Mammary epithelial cell (primary cell): ENCODE measurements at regions of chr5 and their contacts with region 1.

Region 1: DNA sequence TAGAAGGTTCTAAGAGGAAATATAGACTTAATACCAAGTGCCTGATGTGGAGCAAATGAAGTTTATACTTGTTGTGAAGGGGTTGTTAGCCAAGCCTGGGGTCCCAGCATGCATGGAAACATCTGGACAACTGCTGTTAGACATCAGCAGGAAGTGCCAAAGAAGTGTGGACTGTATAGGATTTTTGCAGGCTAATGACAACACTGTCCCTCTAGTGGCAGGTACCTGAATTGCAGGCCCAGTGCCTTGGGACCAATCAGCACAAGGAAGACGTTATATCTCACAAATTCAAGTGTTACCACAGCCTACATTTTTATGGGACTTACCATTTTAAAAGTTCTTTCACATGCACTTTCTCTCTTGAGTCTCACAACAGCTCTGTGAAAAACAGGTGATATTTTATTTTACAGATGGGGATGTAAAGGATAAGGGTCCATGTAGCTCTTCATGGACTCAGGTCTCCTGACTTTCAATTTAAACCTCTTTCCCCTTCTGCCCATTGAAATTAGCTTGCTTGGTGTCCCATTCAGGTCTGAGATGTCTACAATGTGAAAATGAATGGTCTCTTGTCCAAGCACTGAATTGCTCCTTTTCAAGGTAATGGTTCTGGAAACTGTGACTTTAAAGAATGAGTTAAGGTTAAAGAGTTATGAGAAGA is 89.0 kb upstream of the MAP1B start:
- DNase-seq: peak; percentile 40
- H3K4me3 ChIP-seq: no peak overlapping the region
- H3K27ac ChIP-seq: no peak overlapping the region
- H3K4me1 ChIP-seq: peaks cover 4% of the 10 kb centered on the region
- H3K27me3 ChIP-seq: no peaks in the 10 kb centered on the region
- CTCF ChIP-seq: peak; percentile 90 to 100

Region 2: GRCh38 chr5:72063219-72063819 is 45.0 kb after region 1 on chr5:
- CTCF ChIA-PET with region 1: no interaction called
- dilution Hi-C with region 1: no loop called
- in situ Hi-C with region 1: no loop called
- intact Hi-C with region 1: no loop called
- DNase-seq: peak; percentile 8
- H3K4me3 ChIP-seq: no peak overlapping the region
- H3K27ac ChIP-seq: no peak overlapping the region
- H3K4me1 ChIP-seq: peaks cover 28% of the 10 kb centered on the region
- H3K27me3 ChIP-seq: no peaks in the 10 kb centered on the region
- CTCF ChIP-seq: no peak

Region 3: DNA sequence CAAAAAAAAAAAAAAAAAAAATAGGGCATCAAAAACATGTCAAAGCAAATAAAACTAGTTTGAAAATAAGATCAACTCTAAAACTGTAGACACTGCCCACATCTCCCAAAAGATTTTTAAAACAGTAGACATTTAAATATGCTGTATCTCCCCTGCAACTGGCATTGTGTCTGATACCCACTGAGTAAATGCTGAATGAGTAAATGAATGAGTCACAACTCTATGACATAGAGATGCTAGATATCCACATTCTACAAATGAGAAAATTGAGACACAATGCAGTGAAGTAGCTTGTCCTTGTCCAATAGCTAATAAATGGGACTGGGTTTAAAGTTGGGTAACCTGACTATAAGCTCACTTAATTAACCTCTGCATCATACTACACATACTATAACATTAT is 74.9 kb after region 1 on chr5:
- CTCF ChIA-PET with region 1: no interaction called
- dilution Hi-C with region 1: no loop called
- in situ Hi-C with region 1: no loop called
- intact Hi-C with region 1: no loop called
- DNase-seq: peak; percentile 35
- H3K4me3 ChIP-seq: no peak overlapping the region
- H3K27ac ChIP-seq: no peak overlapping the region
- H3K4me1 ChIP-seq: no peaks in the 10 kb centered on the region
- H3K27me3 ChIP-seq: no peaks in the 10 kb centered on the region
- CTCF ChIP-seq: no peak

Region 4: DNA sequence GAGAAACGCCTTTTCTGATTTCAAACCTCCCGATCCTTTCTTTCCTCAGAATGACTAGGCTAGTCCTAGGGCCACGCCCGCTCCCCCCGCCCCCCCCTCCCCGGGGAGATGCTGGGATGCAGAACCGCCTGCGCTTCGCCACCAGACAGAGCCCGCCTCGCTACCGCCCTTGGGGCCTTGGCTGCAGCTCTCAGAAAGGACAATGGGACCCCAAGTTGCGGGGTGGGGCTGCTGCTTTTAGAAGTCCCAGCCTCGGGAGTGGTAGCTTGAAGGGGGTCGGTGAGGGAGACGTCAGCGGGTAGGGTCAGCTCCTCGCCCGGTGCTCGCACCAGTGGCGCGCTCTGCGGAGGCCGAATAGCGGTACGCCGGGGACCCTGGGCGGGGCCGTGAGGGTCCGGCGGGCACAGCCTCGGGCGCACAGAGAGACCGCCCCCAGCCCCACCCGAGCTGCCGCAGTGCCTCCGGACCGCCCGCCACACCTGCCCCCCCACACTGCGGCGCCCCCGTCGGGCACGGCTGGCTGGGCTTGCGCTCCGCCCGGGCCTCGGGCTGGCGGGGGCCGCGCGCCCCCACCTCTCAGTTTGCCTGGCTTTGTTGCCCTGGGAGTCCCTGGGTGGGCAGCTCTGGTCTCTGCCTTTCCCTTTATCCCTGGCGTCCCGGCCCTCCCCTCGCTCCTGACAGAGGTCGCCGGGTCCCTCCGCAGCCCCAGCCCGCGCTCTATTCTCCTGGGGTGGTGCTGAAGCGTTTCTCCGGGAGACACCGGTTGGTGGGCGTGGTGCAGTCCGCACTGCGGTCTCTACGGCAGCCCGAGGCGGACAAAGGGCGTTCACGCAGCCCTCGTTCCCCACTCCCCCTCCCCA is 90.2 kb after region 1 on chr5:
- CTCF ChIA-PET with region 1: no interaction called
- dilution Hi-C with region 1: no loop called
- in situ Hi-C with region 1: no loop called
- intact Hi-C with region 1: loop called (anchors 5 kb)
- DNase-seq: peak; percentile 33
- H3K4me3 ChIP-seq: peak overlapping the region; percentile 64 to 74 (median 66)
- H3K27ac ChIP-seq: no peak overlapping the region
- H3K4me1 ChIP-seq: peaks cover 22% of the 10 kb centered on the region
- H3K27me3 ChIP-seq: peaks cover 18% of the 10 kb centered on the region
- CTCF ChIP-seq: no peak

Region 5: DNA sequence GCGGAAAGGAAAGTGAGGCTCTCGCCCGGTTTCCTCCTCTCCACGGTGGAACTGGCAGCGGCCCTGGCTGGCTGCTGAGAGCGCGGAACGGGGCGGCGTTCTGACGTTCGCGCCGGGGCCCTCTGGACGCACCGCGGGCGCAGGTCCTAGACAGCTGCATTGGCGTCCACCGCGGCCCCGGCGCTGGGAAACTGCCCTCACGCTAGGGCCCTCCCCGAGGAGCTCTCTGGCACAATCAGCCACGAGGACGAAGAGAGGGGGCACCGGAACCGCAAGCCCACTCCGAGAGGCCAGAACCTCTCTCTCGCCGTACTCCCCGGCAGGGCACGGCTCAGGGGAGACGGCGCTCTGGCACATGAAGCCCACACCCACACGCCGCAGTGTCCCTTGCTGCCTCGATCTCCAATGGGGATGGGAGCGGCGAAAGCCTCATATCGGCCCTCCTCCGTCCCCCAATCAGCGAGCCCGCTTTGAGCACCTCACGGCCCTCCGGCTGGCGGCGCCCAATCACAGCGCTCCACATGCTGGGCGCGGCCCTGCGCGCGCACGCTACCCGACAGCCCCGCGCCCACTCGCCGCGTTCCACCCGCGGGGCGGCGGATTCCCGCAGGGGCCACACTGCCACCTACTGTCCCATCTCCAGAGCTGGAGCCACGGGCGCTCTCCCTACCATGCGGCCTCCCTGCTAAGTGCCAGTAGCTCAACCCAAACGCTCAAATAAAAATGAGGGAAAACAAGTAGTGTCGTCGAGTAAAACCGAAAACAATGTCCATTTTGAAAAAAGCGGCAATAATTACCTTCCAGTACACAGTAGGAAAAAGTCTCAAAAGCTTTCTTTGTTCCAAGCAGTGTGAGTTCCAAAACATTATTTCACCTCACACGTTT is 289.9 kb after region 1 on chr5:
- CTCF ChIA-PET with region 1: no interaction called
- dilution Hi-C with region 1: loop called (anchors 10 kb)
- in situ Hi-C with region 1: no loop called
- intact Hi-C with region 1: loop called (anchors 5 kb)
- DNase-seq: peak; percentile 97
- H3K4me3 ChIP-seq: peak overlapping the region; percentile 64 to 99 (median 72)
- H3K27ac ChIP-seq: peak overlapping the region; percentile 78
- H3K4me1 ChIP-seq: peaks cover 16% of the 10 kb centered on the region
- H3K27me3 ChIP-seq: no peaks in the 10 kb centered on the region
- CTCF ChIP-seq: peak; percentile 60 to 81

Region 6: DNA sequence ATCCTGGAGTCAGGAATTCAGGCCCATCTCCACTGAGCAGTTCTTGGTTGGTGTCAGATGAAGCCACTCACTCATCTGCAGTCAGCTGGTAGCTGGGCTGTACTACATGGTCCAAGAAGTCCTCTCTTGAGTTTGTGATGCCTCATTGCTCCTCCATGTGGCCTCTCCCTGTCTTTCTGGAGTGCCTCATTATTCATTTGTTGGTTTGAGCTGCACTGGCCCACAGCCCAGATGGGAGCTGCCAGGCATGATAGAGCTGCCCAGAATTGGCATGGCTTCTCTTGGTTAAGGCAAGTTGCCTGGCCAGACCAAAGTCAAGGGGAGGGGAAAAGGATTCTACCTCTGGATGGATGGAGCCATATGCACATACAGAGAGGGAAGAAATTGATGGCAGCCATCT is 309.9 kb after region 1 on chr5:
- CTCF ChIA-PET with region 1: interaction called, 14 read pairs
- dilution Hi-C with region 1: no loop called
- in situ Hi-C with region 1: no loop called
- intact Hi-C with region 1: no loop called
- DNase-seq: peak; percentile 55
- H3K4me3 ChIP-seq: no peak overlapping the region
- H3K27ac ChIP-seq: no peak overlapping the region
- H3K4me1 ChIP-seq: peaks cover 18% of the 10 kb centered on the region
- H3K27me3 ChIP-seq: no peaks in the 10 kb centered on the region
- CTCF ChIP-seq: no peak